Mammary epithelial cell (primary cell): ENCODE measurements at regions of chr6 and their contacts with region 1.

Region 1: DNA sequence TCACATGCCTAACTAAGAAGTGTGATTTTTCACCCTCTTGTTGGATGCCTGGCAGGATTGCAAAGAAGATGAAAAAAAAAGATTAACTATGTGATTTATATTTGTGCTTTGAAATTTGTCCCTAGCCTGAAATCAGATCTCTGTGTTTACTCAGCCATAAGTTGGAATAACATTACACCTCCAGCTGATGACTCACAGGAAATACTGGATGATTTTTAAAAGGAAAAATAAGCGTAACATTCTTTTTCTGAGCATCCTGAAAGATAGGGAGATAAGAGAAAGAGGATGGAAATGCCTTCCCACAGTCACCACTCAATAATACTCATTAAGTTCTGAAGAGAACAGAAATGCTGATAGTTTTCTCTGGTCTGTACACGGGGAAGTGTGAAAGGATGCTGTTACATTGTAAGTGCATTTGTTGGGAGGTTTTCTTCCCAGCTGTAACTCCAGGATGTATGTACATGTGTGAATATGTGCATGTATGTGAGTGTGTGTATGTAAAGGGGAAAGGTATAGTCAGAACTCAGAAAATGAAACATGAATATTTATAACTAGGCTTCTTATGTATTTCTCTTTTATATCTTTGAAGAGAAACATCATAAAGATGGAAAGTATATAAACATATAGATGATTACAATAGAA is 37.4 kb upstream of the RIPPLY2 start:
- DNase-seq: peak; percentile 6
- H3K4me3 ChIP-seq: no peak overlapping the region
- H3K27ac ChIP-seq: no peak overlapping the region
- H3K4me1 ChIP-seq: no peaks in the 10 kb centered on the region
- H3K27me3 ChIP-seq: peaks cover 1% of the 10 kb centered on the region
- CTCF ChIP-seq: no peak

Region 2: DNA sequence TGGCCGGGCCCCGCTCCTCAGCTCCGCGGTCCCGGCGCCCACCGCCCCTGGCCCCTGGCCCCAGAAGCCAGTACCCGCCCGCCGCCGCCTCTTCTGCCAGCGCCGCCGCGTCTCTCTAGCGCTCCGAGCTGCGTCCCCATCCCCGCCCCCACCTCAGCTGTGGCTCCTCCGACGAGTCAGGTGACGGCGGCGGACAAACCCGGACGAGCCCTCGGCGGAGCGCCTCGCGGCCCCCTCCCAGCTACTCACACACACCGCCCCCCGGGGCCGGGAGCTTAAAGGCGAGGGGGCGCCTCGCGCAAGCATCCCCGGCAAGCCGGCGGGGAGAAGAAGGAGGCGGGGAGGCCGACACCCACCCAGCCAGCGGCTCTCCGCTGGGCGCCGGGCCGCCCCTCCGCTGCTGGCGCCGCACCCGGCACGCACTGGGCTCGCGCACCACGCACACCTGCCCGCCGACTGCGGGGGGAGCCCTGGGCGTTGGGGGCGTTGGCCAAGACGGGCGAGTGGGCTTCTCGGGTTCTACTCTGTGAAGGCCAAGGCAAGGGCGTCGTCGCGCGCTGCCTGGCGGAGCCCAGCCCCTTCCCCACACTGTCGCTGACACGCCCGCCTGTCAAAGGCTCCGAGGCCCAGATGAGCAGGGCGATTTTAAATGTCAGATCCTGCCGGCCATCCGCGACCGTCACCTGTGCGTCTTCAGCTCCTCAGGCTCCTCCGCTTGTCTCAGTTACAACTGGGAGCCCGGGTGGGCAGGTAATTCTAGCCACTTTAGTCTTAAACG is 106.6 kb before region 1 on chr6 and contains the start of gene SNAP91:
- CTCF ChIA-PET with region 1: no interaction called
- dilution Hi-C with region 1: loop called (anchors 25 kb)
- in situ Hi-C with region 1: no loop called
- intact Hi-C with region 1: no loop called
- DNase-seq: no peak
- H3K4me3 ChIP-seq: peak within 1 kb of the TSS; percentile 39 to 47 (median 46)
- H3K27ac ChIP-seq: no peak within 1 kb of the TSS
- H3K4me1 ChIP-seq: peaks cover 11% of the 10 kb centered on the region
- H3K27me3 ChIP-seq: peaks cover 32% of the 10 kb centered on the region
- CTCF ChIP-seq: no peak
- total RNA-seq, gene SNAP91: 0.33 TPM in 1 of 2 donors, not detected in the other